Activated naive CD8-positive, alpha-beta T cell treated with anti-CD3 and anti-CD28 coated beads, Interleukin-2, amount 10 ng/mL, durations not matched to agents 7 days and 5 days (primary cell): ENCODE measurements at regions of chr9 and their contacts with region 1.

Region 1: DNA sequence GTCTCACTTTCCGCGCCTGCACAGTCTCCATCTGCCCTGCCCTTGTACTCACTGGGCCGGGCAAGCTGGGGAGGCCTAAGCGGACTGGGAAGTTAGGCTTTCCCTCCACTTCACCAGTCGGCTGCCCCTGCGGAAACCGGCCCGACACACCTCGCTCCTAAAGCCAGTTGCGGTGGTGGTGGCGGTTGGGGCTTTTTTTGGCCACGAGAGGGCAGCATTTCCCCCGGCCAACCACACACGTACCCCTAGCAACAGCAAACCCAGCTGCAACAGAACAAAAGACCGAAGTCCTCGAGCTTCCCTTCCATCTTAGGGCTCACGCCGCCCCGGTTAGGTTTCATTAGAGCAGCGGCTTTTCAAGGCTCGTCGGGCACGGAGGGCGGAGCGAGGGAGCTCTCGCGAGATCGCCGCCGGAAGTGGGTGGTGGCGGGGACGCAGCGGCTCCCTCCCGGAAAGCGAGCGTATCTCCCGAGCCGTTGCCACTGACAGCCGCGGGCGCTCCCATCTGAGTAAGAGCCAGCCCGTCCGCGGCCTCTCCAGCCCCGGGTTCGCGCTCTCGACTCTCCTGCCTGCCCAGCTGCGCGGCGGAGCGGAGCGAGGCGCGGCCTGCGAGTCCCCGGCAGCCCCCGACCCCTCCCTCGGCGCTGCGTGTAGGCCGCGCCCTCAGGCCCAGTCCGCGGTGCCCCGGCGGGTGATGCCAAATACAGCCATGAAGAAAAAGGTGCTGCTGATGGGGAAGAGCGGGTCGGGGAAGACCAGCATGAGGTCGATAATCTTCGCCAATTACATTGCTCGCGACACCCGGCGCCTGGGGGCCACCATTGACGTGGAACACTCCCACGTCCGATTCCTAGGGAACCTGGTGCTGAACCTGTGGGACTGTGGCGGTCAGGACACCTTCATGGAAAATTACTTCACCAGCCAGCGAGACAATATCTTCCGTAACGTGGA is at the start of gene RRAGA:
- DNase-seq: peak; percentile 97
- ATAC-seq: peak; percentile 88
- H3K4me3 Mint-ChIP-seq: peak within 1 kb of the TSS; percentile 82
- H3K27ac Mint-ChIP-seq: peak within 1 kb of the TSS; percentile 99
- H3K4me1 Mint-ChIP-seq: peaks cover 20% of the 10 kb centered on the region
- H3K27me3 Mint-ChIP-seq: no peaks in the 10 kb centered on the region
- total RNA-seq, gene RRAGA: 49.4 to 51.8 TPM

Region 2: GRCh38 chr9:19379697-19380046 is 330.4 kb after region 1 on chr9:
- POLR2A ChIA-PET with region 1: interaction called, 12 read pairs
- DNase-seq: no peak
- ATAC-seq: peak; percentile 48
- H3K4me3 Mint-ChIP-seq: peak overlapping the region; percentile 100
- H3K27ac Mint-ChIP-seq: peak overlapping the region; percentile 99
- H3K4me1 Mint-ChIP-seq: peaks cover 42% of the 10 kb centered on the region
- H3K27me3 Mint-ChIP-seq: no peaks in the 10 kb centered on the region